ENCODE measurements at regions of chr15 and their contacts with region 1.

Region 1: DNA sequence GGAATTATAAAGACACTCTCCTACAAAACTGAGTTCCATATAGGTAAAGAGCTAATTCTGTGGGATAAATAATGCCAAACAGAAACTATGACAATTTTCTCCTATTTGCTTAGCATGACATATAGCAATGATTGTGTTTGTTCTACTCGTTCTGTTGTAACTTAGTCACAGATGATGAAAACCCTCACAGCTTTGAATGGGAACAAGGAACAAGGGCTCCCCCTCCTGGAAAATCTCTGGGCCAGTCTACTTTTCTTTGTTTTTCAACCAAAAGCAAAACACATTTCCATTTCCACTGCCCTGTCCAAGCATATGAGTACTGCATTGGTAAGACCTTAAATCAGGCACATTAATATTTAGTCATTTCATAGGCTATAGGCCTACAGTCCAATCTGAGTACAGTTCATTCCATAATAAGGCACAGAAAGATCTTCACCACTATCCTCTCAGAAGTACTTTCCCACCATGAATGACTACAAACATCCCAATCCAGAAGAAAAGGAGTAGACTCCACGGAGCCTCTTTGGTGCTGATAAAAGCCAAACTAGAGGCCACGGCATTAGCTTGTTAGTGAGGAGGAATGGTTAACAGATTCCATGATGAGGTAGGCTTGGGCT is 67.1 kb downstream of the ATP8B4 start:
- DNase-seq: peak; percentile 49 to 87
- ATAC-seq: peak; percentile 90 to 95
- H3K4me3 ChIP-seq: no peak overlapping the region; the same call in 2 of the 3 replicates
- H3K27ac ChIP-seq: peak overlapping the region; percentile 61 to 77
- H3K4me1 ChIP-seq: peaks cover 21% of the 10 kb centered on the region
- CTCF ChIP-seq: peak; percentile 97
- EP300 ChIP-seq: peak in 1 of 2 experiments; percentile 24; a peak in 1 of 5 replicates
- POLR2A ChIP-seq: no peak
- RAD21 ChIP-seq: peak; percentile 98 to 99

Region 2: GRCh38 chr15:49235446-49236124 is 816.3 kb before region 1 on chr15:
- CTCF ChIA-PET with region 1: interaction called, 41 read pairs
- POLR2A ChIA-PET with region 1: interaction called, 3 read pairs
- DNase-seq: peak in 1 of 2 experiments; percentile 56
- ATAC-seq: peak in 1 of 2 experiments; percentile 85; a peak in 3 of 6 replicates
- H3K4me3 ChIP-seq: no peak overlapping the region
- H3K27ac ChIP-seq: peak overlapping the region in 1 of 2 experiments; percentile 50; a peak in 2 of 6 replicates
- H3K4me1 ChIP-seq: peaks cover 9% of the 10 kb centered on the region
- CTCF ChIP-seq: peak; percentile 67
- EP300 ChIP-seq: no peak
- POLR2A ChIP-seq: no peak
- RAD21 ChIP-seq: peak; percentile 78 to 82

Region 3: DNA sequence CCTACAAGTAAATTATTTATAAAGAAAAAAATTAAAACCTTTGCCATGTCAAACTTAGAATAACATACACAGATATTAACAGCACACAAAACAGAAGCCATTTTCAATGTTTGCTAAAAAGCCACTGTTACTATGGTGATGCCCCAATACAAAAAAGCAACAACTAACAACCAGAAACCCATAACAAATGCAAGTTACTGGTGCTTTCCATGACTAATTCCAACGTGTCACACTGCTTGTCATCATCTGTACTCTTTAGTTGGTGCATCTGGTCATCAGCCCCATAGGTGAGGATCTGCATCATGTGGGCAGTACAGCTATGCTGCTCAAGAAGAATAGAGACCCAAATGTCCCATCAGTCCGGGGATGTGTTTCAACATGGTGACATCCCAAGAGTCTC is 14.3 kb after region 1 on chr15:
- CTCF ChIA-PET with region 1: interaction called, 39 read pairs
- POLR2A ChIA-PET with region 1: no interaction called
- DNase-seq: peak; percentile 18 to 64
- ATAC-seq: peak; percentile 67 to 68; a peak in 5 of 6 replicates
- H3K4me3 ChIP-seq: no peak overlapping the region
- H3K27ac ChIP-seq: no peak overlapping the region
- H3K4me1 ChIP-seq: no peaks in the 10 kb centered on the region
- CTCF ChIP-seq: no peak
- EP300 ChIP-seq: no peak
- POLR2A ChIP-seq: no peak
- RAD21 ChIP-seq: no peak

Region 4: GRCh38 chr15:50134520-50135024 is 82.7 kb after region 1 on chr15:
- CTCF ChIA-PET with region 1: interaction called, 16 read pairs
- POLR2A ChIA-PET with region 1: no interaction called
- DNase-seq: peak; percentile 80
- ATAC-seq: peak; percentile 72 to 75
- H3K4me3 ChIP-seq: no peak overlapping the region
- H3K27ac ChIP-seq: peak overlapping the region; percentile 69 to 86
- H3K4me1 ChIP-seq: peaks cover 52% of the 10 kb centered on the region
- CTCF ChIP-seq: no peak
- EP300 ChIP-seq: peak in 1 of 2 experiments; percentile 55; a peak in 2 of 5 replicates
- POLR2A ChIP-seq: no peak
- RAD21 ChIP-seq: 0 out of 5 replicates have a peak, but pooled peaks of 1 of the 2 experiments have one; percentile 23